Activated B cell treated with CpG ODN at 0.5 μM for 24 hours (primary cell): ENCODE measurements at regions of chr14 and their contacts with region 1.

Region 1: GRCh38 chr14:23929822-23930294 is 23.7 kb upstream of the DHRS4 start:
- DNase-seq: peak; percentile 60
- ATAC-seq: peak; percentile 92
- H3K4me3 Mint-ChIP-seq: no peak overlapping the region
- H3K27ac Mint-ChIP-seq: no peak overlapping the region
- H3K4me1 Mint-ChIP-seq: no peaks in the 10 kb centered on the region
- H3K27me3 Mint-ChIP-seq: peaks cover 8% of the 10 kb centered on the region
- CTCF ChIP-seq: no peak

Region 2: DNA sequence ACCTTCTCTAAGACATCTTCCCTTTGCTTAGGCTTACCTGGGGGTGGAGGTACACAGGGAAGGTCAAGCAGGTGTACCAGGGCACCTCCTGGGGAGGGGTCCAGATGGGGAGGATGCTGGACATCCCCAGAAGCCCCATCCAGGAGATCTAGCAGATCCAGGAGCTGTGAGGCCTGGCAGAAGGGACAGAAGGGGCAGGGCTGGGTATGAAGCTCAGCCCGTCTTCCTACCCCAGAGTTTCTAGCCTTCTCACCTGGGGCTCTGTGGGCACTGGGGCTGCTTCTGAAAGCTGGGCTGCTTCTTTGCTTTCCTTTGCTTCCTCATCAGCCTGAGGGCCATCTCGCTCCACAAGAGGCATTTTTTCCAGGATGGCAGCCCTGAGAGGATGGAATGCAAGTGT is 368.6 kb before region 1 on chr14:
- CTCF ChIA-PET with region 1: no interaction called
- POLR2A ChIA-PET with region 1: interaction called, 10 read pairs
- intact Hi-C with region 1: no loop called
- DNase-seq: no peak
- ATAC-seq: no peak
- H3K4me3 Mint-ChIP-seq: no peak overlapping the region
- H3K27ac Mint-ChIP-seq: no peak overlapping the region
- H3K4me1 Mint-ChIP-seq: peaks cover 28% of the 10 kb centered on the region
- H3K27me3 Mint-ChIP-seq: no peaks in the 10 kb centered on the region
- CTCF ChIP-seq: no peak

Region 3: DNA sequence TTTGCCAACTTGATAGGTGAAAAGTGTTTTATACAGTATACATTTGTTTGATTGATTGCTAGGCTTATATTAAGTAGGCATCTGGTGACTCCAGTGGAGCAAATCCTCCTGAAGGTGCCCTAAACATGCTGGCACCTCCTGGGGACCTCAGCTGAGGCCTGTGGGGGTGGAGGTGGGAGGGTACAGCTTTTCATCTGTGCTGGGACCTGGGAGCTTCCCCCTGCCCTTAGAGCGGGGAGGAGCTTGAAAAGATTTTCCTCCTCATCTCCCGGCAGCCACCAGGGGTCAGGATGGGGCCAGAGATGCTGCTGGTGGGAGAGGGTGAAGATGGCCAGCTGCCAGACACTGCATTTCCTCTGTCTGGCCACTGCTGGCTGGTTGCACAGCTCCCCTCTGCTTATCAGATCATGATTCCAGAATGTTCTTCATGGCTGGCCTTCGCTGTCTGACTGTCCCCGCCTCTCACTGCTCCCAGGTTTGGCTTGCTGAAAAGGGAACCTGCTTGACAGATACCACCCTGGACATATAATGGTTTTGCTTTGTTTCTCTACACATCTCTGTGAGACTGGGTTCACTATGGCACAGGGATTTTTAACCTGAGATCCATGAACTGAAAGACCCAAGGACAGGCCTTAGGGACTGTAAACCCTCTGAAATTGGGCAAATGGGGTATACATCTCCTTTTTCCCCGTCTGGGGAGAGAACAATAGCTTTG is 340.8 kb before region 1 on chr14:
- CTCF ChIA-PET with region 1: interaction called, 19 read pairs
- POLR2A ChIA-PET with region 1: no interaction called
- intact Hi-C with region 1: loop called (anchors 1 kb)
- DNase-seq: peak; percentile 63
- ATAC-seq: peak; percentile 99
- H3K4me3 Mint-ChIP-seq: no peak overlapping the region
- H3K27ac Mint-ChIP-seq: no peak overlapping the region
- H3K4me1 Mint-ChIP-seq: peaks cover 5% of the 10 kb centered on the region
- H3K27me3 Mint-ChIP-seq: peaks cover 18% of the 10 kb centered on the region
- CTCF ChIP-seq: no peak

Region 4: DNA sequence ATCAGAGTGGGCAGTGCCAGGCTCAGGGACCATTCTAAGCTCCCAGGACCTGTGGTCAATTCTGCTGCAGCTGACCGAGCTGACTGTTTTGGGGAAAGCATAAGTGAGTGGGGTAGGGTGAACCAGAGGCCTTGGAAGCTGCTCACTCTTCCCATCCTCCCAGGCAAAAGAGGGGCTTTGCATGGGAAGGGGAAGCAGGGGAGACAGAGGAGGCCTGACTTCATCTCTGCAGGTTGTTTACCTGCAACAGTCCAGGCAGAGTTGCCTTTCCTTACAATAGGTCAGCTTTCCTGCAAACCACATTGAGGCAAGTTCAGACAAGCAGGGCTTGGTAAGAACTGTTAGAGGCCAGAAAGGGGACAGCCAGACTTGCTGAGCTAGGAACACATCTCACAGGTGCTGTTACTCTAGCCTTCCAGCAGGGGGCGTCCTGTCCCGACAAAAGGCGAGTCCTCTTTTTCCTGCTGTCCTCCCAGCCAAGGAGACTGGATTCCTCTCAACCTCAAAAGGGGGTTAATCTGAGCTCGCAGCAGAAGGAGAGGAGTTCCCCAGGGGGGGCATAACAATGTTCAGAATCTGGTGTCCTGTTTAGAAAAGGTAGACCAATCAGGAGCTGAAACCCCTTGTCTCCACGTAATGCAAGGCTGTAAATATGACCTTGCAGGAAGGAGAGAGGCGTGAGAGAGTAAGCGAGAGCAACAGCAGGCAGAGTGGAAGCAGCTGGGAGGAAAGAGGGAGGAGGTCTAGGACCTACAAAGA is 298.0 kb before region 1 on chr14:
- CTCF ChIA-PET with region 1: interaction called, 9 read pairs
- POLR2A ChIA-PET with region 1: no interaction called
- intact Hi-C with region 1: loop called (anchors 2 kb)
- DNase-seq: peak; percentile 47
- ATAC-seq: peak; percentile 52
- H3K4me3 Mint-ChIP-seq: no peak overlapping the region
- H3K27ac Mint-ChIP-seq: no peak overlapping the region
- H3K4me1 Mint-ChIP-seq: peaks cover 4% of the 10 kb centered on the region
- H3K27me3 Mint-ChIP-seq: peaks cover 9% of the 10 kb centered on the region
- CTCF ChIP-seq: peak; percentile 92

Region 5: GRCh38 chr14:23866269-23866668 is 63.6 kb before region 1 on chr14:
- CTCF ChIA-PET with region 1: no interaction called
- POLR2A ChIA-PET with region 1: no interaction called
- intact Hi-C with region 1: no loop called
- DNase-seq: no peak
- ATAC-seq: no peak
- H3K4me3 Mint-ChIP-seq: no peak overlapping the region
- H3K27ac Mint-ChIP-seq: no peak overlapping the region
- H3K4me1 Mint-ChIP-seq: no peaks in the 10 kb centered on the region
- H3K27me3 Mint-ChIP-seq: peaks cover 20% of the 10 kb centered on the region
- CTCF ChIP-seq: no peak